Natural killer cell (primary cell): ENCODE measurements at regions of chr15 and their contacts with region 1.

Region 1: GRCh38 chr15:89893696-89894455 is at the start of gene AP3S2:
- DNase-seq: peak; percentile 86 to 94
- ATAC-seq: peak; percentile 95 to 98 (median 97)
- H3K4me3 ChIP-seq: peak within 1 kb of the TSS; percentile 84
- H3K4me3 Mint-ChIP-seq: peak within 1 kb of the TSS; percentile 99
- H3K27ac ChIP-seq: peak within 1 kb of the TSS; percentile 86
- H3K27ac Mint-ChIP-seq: peak within 1 kb of the TSS; percentile 94 to 98
- H3K4me1 ChIP-seq: peaks cover 15% of the 10 kb centered on the region
- H3K4me1 Mint-ChIP-seq: peaks cover 34 to 35% of the 10 kb centered on the region in 2 donors
- H3K27me3 ChIP-seq: no peaks in the 10 kb centered on the region
- H3K27me3 Mint-ChIP-seq: no peaks in the 10 kb centered on the region
- CTCF ChIP-seq: no peak
- total RNA-seq, gene AP3S2: 28.4 to 38.2 (median 36.8) TPM

Region 2: DNA sequence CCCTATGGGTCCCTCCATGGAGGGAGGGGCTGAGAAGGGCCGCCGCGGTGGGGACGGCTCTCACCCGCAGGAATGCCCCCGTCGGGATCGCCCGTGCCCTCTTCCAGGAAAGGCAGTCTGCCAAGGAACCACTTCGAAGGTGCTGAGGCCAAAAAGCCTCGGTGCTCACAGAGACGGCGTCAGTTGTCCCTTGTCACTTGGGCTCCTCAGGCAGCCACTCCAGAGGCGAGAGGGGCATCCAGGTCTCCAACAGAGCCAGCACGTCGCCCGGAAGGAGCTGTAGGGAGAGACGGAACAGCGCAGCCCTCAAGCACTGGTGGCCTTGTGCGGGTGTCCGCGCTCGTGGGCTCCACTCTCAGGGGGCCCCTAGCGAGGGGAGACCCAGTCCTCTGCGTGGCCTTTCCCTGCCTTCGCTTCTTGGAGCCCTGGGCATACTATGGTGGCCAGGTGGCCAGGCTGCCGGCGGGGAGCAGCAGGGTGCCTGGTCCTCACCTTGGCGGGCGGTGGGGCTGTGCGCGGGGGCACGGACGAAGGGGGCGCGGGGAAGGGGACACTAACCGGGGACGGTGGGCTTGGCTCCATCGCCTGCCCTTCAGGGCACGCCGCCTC is 143.8 kb before region 1 on chr15:
- intact Hi-C with region 1: no loop called
- DNase-seq: peak in 1 of 2 donors; percentile 28
- ATAC-seq: no peak
- H3K4me3 ChIP-seq: peak overlapping the region; percentile 50
- H3K4me3 Mint-ChIP-seq: peak overlapping the region; percentile 85
- H3K27ac ChIP-seq: no peak overlapping the region
- H3K27ac Mint-ChIP-seq: peak overlapping the region in 1 of 2 donors; percentile 58
- H3K4me1 ChIP-seq: peaks cover 17% of the 10 kb centered on the region
- H3K4me1 Mint-ChIP-seq: peaks cover 0 to 4% of the 10 kb centered on the region in 2 donors
- H3K27me3 ChIP-seq: peaks cover 2% of the 10 kb centered on the region
- H3K27me3 Mint-ChIP-seq: peaks cover 0 to 7% of the 10 kb centered on the region in 2 donors
- CTCF ChIP-seq: no peak

Region 3: DNA sequence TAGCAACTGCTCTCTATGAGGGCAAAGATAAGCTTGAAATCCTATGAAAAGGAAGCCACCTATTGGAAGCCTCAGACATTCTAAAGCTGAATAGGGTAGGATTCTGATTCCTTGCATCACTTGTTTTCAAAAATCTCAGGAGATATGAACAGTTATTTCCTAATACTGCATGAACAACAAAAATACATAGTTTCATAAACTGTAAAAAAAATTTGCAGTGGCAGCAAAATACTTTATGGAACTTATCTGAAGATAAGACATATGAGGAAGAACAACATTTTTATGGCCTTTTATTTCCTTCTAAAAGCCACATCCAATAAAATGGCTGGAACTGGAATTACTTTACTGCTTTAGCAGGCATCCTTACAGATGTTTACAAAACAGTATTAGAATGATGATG is 30.0 kb before region 1 on chr15:
- intact Hi-C with region 1: no loop called
- DNase-seq: no peak
- ATAC-seq: no peak
- H3K4me3 ChIP-seq: no peak overlapping the region
- H3K4me3 Mint-ChIP-seq: no peak overlapping the region
- H3K27ac ChIP-seq: no peak overlapping the region
- H3K27ac Mint-ChIP-seq: no peak overlapping the region
- H3K4me1 ChIP-seq: no peaks in the 10 kb centered on the region
- H3K4me1 Mint-ChIP-seq: peaks cover 0 to 5% of the 10 kb centered on the region in 2 donors
- H3K27me3 ChIP-seq: no peaks in the 10 kb centered on the region
- H3K27me3 Mint-ChIP-seq: no peaks in the 10 kb centered on the region
- CTCF ChIP-seq: no peak

Region 4: DNA sequence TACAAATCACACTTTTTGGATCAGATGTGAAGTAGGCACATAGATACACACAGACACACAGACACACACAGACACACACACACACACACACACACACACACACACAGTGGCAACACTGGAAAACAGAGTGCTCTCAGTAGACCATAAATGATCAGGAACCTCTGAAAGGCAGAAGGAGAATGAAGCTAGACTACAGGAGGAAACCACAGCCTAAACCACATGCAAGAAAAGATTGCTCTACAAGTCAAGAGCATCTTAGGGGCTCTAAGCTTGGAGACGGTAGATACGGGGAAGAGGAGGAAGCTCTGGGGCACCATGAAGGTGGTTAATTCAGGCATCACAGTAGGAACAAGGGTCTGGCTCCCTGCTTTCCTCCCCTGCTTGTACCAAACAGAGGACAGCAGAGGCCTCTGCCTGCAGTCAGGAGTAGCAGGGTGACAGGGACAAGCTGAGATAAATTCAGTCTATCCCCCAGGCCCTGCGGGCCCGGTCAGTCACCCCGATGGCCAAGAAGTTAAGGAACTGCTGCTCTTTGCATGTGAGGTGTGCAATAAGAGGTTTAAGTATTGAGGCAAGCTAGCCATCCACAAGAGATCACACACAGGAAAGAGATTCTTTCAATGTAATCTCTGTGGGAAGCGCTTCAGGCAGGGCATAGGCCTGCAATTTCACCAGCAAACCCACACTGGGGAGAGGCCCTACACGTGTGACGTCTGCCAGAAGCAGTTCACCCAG is 42.3 kb after region 1 on chr15:
- intact Hi-C with region 1: loop called (anchors 1 kb)
- DNase-seq: peak in 1 of 2 donors; percentile 63
- ATAC-seq: peak; percentile 80 to 89 (median 89)
- H3K4me3 ChIP-seq: no peak overlapping the region
- H3K4me3 Mint-ChIP-seq: peak overlapping the region; percentile 52
- H3K27ac ChIP-seq: peak overlapping the region; percentile 66
- H3K27ac Mint-ChIP-seq: peak overlapping the region; percentile 72 to 85
- H3K4me1 ChIP-seq: peaks cover 25% of the 10 kb centered on the region
- H3K4me1 Mint-ChIP-seq: peaks cover 31% of the 10 kb centered on the region in 2 donors
- H3K27me3 ChIP-seq: no peaks in the 10 kb centered on the region
- H3K27me3 Mint-ChIP-seq: no peaks in the 10 kb centered on the region
- CTCF ChIP-seq: no peak